Naive thymus-derived CD4-positive, alpha-beta T cell (primary cell): ENCODE measurements at regions of chr9 and their contacts with region 1.

Region 1: DNA sequence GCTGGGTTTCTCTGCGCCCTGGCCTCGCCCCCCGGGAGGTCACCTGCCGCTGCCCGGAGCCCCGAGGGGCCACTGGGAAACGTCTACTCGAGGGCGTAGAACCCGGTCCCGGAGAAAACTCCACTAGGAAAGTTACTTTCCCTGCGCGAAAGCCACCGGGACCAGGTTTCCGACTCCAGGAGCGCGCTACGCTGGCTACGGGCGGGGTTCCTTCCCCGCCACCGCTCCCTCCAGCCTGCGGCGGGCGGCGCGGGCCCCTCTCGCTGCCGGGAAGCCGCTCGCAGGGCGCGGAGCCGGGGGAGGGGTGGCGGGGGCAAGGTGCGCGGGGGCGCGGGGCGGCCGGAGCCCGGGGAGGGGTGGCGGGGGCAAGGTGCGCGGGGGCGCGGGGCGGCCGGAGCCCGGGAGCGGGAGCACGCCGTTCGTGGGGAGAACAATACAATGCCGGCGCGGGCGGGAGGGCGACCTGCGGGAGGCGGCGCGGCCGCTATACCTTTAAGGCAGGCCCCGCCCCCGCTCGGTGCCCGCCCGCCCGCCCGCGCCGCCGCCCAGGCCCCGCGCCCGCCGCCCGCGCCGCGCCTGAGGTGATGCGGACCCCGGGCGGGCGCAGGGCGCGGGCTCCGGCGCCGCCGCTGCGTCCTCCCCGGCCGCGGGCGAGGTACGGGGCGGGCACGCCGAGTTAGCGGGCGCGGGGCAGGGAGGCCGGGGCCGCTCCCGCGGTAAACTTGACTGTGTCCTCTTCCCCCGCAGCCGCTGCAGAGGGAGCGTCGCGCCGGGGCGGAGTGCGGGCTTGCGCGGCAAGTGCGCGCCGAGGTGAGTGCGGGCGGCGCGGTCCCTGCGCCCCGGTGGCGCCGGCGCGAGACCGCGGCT is 278.1 kb downstream of the AOPEP start:
- DNase-seq: peak in 6 of 9 donors; percentile 7 to 63 (median 18)
- ATAC-seq: peak; percentile 74
- H3K4me3 ChIP-seq: peak overlapping the region; percentile 51
- H3K4me3 Mint-ChIP-seq: peak overlapping the region in 5 of 10 donors; percentile 80 to 87 (median 81)
- H3K27ac ChIP-seq: no peak overlapping the region
- H3K27ac Mint-ChIP-seq: peak overlapping the region in 1 of 9 donors; percentile 76
- H3K4me1 ChIP-seq: peaks cover 7% of the 10 kb centered on the region in 2 donors
- H3K4me1 Mint-ChIP-seq: peaks cover 0 to 27% (median 9%) of the 10 kb centered on the region in 7 donors
- H3K27me3 ChIP-seq: peaks cover 11 to 13% of the 10 kb centered on the region in 2 donors
- H3K27me3 Mint-ChIP-seq: peaks cover 28 to 41% (median 37%) of the 10 kb centered on the region in 5 donors

Region 2: DNA sequence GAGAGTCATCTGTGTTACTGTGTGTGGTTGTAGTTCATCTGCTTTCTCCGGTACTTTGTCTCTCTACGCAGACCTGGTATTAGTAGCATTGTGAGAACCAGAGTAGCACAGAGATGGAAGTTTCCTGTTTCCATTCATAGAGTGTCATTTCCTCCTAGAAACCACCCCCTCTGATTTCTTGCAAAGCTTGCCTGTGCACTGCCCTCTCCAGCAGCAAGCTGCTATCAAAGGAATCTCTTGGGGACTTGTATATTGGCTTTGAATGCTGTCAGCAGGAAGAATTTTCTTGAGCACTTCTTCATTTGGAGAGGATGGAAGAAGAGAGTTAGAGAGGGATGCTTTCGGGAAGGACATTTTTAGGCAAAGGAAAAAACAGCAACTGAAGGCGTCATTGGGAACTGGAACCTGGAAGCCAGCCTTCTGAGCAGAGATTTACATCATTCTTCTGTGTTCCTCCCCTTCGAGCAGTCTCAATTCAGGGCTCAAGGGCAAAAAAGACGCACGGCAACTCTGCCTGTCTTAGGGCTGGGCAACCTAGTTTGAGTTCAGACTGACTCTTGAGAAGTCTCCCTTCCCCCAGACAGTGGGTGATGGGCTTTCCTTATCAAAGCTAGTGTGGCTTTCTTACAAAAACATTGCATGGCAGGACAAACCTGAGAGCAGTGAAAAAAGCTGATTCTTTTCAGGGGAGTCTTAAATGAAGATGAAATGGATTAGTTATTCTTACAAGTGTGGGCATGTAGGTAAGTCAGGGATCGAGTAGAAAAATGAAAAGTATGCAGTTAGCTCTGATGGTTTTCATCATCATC is 51.9 kb before region 1 on chr9:
- CTCF ChIA-PET with region 1: no interaction called
- POLR2A ChIA-PET with region 1: no interaction called
- intact Hi-C with region 1: loop called in 1 of 2 experiments (anchors 5 kb)
- DNase-seq: peak in 7 of 9 donors; percentile 24 to 66 (median 48)
- ATAC-seq: peak; percentile 82
- H3K4me3 ChIP-seq: peak overlapping the region; percentile 1
- H3K4me3 Mint-ChIP-seq: peak overlapping the region; percentile 30 to 83 (median 72)
- H3K27ac ChIP-seq: no peak overlapping the region
- H3K27ac Mint-ChIP-seq: peak overlapping the region; percentile 14 to 86 (median 74)
- H3K4me1 ChIP-seq: peaks cover 20 to 26% of the 10 kb centered on the region in 2 donors
- H3K4me1 Mint-ChIP-seq: peaks cover 26 to 44% (median 36%) of the 10 kb centered on the region in 7 donors
- H3K27me3 ChIP-seq: no peaks in the 10 kb centered on the region
- H3K27me3 Mint-ChIP-seq: no peaks in the 10 kb centered on the region

Region 3: DNA sequence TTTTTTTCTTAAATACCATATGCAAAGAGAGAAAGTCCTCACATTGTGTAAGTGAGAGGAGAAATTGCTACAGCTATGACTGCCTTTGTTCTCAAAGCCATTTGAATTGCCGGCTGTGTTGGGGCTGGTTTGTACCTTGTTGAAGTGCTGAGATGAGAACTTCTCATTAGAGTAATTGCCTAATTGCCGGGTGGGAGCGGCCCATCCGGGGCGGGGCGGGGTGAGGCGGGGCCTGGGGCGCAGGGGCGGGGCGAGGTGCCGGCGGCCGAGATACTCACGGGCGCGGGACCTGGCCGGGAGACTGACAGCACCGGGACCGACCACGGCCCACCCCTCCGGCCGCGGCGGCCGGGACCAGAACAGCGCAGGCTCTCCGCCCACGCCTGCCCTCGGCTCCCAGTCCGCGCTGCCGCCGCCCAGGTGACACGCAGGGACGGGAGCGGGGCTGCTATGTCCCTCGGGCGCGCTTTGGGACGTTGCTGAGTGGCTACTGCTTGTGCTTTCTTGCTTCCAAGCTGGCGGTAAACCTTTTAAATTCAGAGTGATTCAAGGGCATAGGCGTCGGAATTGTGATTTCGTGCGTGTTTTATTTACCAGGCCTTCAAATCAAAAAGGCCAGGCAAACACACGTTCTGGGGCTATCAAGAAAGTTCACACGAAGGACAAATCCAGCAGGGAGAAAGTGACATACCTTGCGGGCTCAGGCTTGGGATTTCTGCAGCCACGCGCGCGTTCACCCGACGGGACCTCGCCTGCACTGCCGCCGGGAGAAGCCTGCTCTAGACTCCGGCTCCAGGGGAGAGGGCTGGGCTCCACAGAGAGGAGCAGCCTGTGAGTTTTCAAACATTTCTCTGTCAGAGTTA is 43.8 kb after region 1 on chr9:
- CTCF ChIA-PET with region 1: no interaction called
- POLR2A ChIA-PET with region 1: no interaction called
- intact Hi-C with region 1: loop called in 1 of 2 experiments (anchors 2 kb)
- DNase-seq: peak in 8 of 9 donors; percentile 6 to 56 (median 16)
- ATAC-seq: peak; percentile 92
- H3K4me3 ChIP-seq: peak overlapping the region; percentile 41
- H3K4me3 Mint-ChIP-seq: peak overlapping the region; percentile 74 to 85 (median 80)
- H3K27ac ChIP-seq: no peak overlapping the region
- H3K27ac Mint-ChIP-seq: peak overlapping the region in 3 of 9 donors; percentile 1 to 68 (median 56)
- H3K4me1 ChIP-seq: peaks cover 0 to 4% of the 10 kb centered on the region in 2 donors
- H3K4me1 Mint-ChIP-seq: peaks cover 0 to 14% (median 10%) of the 10 kb centered on the region in 7 donors
- H3K27me3 ChIP-seq: peaks cover 8 to 9% of the 10 kb centered on the region in 2 donors
- H3K27me3 Mint-ChIP-seq: peaks cover 20 to 42% (median 26%) of the 10 kb centered on the region in 5 donors